Panc1 (cell line): ENCODE measurements at regions of chr16 and their contacts with region 1.

Region 1: DNA sequence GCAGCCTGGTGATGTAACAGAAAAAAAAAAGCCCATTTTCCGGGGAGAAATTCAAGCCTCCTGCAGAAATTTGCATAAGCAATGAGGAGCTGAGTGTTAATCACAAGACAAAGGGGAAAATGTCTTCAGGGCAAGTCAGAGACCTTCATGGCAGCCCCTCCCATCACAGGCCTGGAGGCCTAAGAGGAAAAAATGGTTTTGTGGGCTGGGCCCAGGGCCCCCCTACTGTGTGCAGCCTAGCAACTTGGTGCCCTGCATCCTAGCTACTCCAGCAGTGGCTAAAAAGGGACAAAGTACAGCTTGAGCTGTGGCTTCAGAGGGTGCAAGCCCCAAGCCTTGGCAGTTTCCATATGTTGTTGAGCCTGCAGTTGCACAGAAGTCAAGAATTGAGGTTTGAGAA is 49.7 kb downstream of the AHSP start:
- DNase-seq: no peak
- ATAC-seq: no peak
- H3K4me3 ChIP-seq: no peak overlapping the region
- H3K27ac ChIP-seq: no peak overlapping the region
- H3K4me1 ChIP-seq: no peaks in the 10 kb centered on the region
- H3K27me3 ChIP-seq: no peaks in the 10 kb centered on the region
- CTCF ChIP-seq: no peak

Region 2: DNA sequence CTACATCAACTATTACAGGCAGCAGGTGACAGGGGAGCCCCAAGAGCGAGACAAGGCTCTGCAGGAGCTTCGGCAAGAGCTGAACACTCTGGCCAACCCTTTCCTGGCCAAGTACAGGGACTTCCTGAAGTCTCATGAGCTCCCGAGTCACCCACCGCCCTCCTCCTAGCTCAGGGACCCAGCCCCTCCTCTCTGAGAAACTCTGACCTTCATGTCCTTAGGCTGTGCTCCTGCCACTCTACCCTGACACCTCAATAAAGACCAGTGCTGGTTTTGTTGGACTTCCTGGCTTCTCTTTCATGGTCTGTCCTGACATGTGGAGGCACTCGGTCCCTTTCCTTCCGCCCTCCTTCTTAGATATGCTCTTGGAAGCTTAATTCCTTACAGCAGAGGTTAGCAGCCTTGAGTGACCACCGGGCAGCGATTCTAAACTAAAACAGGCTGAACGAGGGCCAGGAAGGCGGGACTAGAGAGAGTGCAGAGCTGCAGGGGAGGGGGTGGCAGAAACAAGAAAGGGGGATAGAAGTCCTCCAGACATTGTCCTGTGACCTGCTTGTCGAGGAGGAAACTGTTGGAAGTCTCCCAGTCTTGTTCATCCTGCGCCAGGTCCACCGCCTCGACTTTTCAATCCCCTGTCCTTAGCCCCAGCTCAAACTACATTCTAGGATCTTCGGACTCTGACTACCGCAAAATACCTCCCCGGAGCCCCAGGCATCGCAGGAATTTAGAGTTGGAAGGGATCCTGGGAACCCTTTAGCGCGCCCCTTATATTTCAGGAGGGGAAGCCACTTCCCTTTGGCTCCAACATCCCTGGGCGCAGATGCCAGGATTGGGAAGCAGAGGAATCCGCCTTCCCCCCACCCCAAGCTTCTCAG is 48.7 kb before region 1 on chr16:
- CTCF ChIA-PET with region 1: no interaction called
- POLR2A ChIA-PET with region 1: no interaction called
- in situ Hi-C with region 1: no loop called
- intact Hi-C with region 1: no loop called
- DNase-seq: no peak
- ATAC-seq: peak; percentile 29; the same call in 1 of the 2 replicates
- H3K4me3 ChIP-seq: peak overlapping the region; percentile 33 to 43
- H3K27ac ChIP-seq: no peak overlapping the region
- H3K4me1 ChIP-seq: 0 out of 2 replicates have a peak, but pooled peaks cover 4% of the 10 kb centered on the region
- H3K27me3 ChIP-seq: peaks cover 6% of the 10 kb centered on the region; the same call in 1 of the 2 replicates
- CTCF ChIP-seq: no peak

Region 3: DNA sequence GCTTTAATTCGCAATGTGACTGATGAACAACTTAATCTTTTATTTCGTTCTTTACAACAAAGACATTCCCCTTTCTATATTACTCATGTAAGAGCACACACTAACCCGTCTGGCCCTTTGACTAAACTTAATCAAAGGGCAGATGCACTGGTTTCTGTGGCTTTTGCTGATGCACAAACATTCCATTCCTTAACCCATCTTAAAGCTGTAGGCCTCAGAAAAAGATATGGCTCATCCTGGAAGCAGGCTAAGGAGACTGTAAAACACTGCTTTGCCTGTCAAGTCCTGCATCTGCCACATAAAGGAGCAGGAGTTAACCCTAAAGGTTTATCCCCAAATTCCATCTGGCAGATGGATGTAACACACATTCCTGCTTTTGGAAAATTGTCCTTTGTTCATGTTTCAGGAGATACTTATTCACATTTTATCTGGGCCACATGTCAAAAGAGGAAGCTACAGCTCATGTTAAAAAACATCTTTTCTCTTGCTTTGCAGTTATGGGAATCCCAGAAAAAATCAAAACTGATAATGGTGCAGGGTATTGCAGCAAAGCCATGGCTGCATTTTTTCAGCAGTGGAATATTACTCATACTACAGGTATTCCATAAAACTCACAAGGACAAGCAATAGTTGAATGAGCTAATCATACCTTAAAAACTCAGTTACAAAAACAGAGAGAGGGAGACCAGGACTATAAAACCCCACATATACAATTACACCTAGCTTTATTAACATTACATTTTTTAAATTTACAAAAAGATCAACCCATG is 87.5 kb after region 1 on chr16:
- CTCF ChIA-PET with region 1: no interaction called
- POLR2A ChIA-PET with region 1: no interaction called
- in situ Hi-C with region 1: no loop called
- intact Hi-C with region 1: loop called (anchors 10 kb)
- DNase-seq: no peak
- ATAC-seq: no peak
- H3K4me3 ChIP-seq: no peak overlapping the region
- H3K27ac ChIP-seq: no peak overlapping the region
- H3K4me1 ChIP-seq: no peaks in the 10 kb centered on the region
- H3K27me3 ChIP-seq: no peaks in the 10 kb centered on the region
- CTCF ChIP-seq: no peak